ENCODE measurements at regions of chr3 and their contacts with region 1.

Region 1: DNA sequence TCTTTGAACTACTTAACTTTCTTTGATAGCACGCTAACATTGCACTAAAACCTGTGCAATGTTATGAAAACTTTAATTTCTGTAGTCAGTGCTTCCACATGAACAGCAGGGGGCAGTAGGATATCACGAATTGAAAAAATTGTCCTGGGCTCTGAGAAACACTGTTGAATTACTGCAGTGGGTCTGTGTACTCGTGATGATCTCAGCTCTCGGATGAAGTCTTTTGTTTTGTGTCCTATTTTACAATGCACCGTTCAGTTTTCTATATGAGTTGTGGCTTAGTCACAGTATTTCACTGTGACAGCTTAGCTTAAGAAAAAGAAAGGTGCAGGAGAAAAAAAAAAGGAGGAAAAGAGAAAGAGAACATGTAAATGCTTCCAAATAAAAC is 141.3 kb upstream of the CCDC54 start:
- DNase-seq: peak; percentile 67
- ATAC-seq: peak; percentile 63
- H3K4me3 Mint-ChIP-seq: peak overlapping the region; percentile 56
- H3K27ac Mint-ChIP-seq: peak overlapping the region; percentile 49
- H3K4me1 Mint-ChIP-seq: peaks cover 15% of the 10 kb centered on the region
- H3K27me3 Mint-ChIP-seq: peaks cover 21% of the 10 kb centered on the region

Region 2: GRCh38 chr3:107045791-107046190 is 190.1 kb before region 1 on chr3:
- CTCF ChIA-PET with region 1: no interaction called
- DNase-seq: no peak
- ATAC-seq: no peak
- H3K4me3 Mint-ChIP-seq: no peak overlapping the region
- H3K27ac Mint-ChIP-seq: no peak overlapping the region
- H3K4me1 Mint-ChIP-seq: no peaks in the 10 kb centered on the region
- H3K27me3 Mint-ChIP-seq: peaks cover 3% of the 10 kb centered on the region

Region 3: DNA sequence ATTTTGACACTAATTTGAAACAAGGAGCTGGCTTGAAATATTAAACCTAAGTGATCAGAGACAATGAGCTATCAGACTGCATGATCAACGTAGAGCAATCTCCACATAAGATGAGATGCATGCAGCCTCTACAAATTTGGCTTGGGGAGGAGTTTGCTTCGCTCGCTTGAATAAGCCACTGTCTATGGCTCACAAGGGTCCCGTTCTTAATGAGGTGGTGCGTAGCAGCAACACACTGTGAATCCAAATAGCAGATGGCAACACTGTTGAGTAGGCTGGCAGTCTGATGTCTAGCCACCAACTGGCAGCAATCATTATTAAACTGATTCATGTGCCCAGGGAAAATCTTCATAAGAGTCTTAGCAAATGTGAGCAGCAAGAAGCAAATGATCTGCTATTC is 15.9 kb after region 1 on chr3:
- CTCF ChIA-PET with region 1: interaction called, 10 read pairs
- DNase-seq: no peak
- ATAC-seq: no peak
- H3K4me3 Mint-ChIP-seq: no peak overlapping the region
- H3K27ac Mint-ChIP-seq: no peak overlapping the region
- H3K4me1 Mint-ChIP-seq: no peaks in the 10 kb centered on the region
- H3K27me3 Mint-ChIP-seq: peaks cover 11% of the 10 kb centered on the region

Region 4: GRCh38 chr3:107271787-107272387 is 36.0 kb after region 1 on chr3:
- CTCF ChIA-PET with region 1: interaction called, 11 read pairs
- DNase-seq: no peak
- ATAC-seq: peak; percentile 61
- H3K4me3 Mint-ChIP-seq: no peak overlapping the region
- H3K27ac Mint-ChIP-seq: no peak overlapping the region
- H3K4me1 Mint-ChIP-seq: no peaks in the 10 kb centered on the region
- H3K27me3 Mint-ChIP-seq: peaks cover 10% of the 10 kb centered on the region

Region 5: DNA sequence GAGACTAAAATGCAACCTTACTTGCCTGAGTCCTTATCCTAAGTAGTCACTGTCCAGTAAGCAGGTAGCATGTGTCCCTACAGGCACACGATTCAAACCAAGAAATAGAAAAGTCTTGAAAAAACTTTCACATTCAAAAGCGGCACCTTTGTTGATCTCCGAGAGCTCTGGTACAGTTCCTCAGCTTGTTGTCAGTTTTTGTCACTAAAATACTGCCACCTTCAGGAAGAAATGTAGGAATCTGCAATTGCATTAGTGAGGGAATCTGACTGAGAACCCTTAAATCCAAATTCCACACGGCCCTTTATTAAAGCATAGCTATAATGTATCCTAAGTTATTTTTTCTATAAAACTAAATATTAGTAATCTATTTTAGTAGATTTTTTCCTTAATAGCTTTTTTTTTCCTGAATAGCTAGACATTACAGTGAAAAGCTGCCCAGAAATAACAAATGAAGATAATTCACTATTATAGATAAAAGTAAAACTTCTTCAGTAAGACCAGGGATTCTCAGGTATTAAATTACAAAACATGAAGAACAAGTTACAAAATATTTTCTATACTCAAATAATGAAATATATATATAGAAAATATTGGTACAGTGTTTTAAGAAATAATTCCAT is 185.4 kb after region 1 on chr3:
- CTCF ChIA-PET with region 1: interaction called, 39 read pairs
- DNase-seq: no peak
- ATAC-seq: peak; percentile 83
- H3K4me3 Mint-ChIP-seq: no peak overlapping the region
- H3K27ac Mint-ChIP-seq: no peak overlapping the region
- H3K4me1 Mint-ChIP-seq: peaks cover 3% of the 10 kb centered on the region
- H3K27me3 Mint-ChIP-seq: peaks cover 28% of the 10 kb centered on the region

Region 6: DNA sequence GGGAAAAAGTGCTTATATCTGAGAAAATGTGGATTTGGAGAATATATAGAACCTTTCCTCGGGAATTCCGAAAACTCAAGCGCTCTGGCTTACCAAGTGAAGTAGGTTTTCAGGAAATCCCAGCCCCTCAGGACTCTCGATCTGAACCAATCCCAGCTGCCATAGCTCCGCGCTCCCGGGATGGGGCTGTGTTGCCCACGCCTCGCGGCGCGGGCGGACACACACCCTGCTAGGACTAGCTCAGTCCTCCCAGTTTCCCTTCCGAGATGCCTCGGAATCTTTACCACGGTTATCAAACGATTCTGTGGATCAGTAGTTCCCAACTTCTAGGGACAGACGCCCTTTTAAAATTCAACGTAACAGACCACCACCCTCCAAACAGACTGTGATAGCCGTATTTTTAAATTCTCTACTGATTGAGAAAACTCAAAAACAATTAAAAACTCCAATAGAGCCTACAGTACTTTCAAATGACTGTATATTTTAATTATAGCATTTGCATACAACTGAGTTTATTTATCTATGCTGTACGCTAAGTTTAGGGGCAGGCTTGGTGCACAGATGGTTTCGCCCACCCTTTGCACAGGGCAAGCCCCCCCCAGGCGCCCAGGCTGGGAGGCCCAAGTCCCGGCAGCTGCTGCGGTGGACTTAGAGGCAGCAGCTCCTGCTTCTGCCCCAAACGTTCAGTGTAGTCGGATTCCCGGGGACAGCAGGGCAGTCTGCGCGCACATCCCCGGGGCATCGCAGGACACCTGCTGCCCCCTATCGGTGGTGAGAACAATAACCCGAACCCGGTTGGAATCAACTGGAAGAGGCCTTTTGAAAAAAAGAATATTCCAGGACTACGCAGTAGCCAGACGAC is 193.6 kb after region 1 on chr3:
- CTCF ChIA-PET with region 1: interaction called, 18 read pairs
- DNase-seq: peak; percentile 73
- ATAC-seq: peak; percentile 61
- H3K4me3 Mint-ChIP-seq: peak overlapping the region; percentile 73
- H3K27ac Mint-ChIP-seq: peak overlapping the region; percentile 28
- H3K4me1 Mint-ChIP-seq: peaks cover 18% of the 10 kb centered on the region
- H3K27me3 Mint-ChIP-seq: peaks cover 35% of the 10 kb centered on the region

Measured in activated CD8-positive, alpha-beta memory T cell treated with anti-CD3 and anti-CD28 coated beads, Interleukin-2, amount 10 ng/mL, durations not matched to agents 7 days and 5 days (primary cell).